ENCODE measurements at regions of chr9 and their contacts with region 1.

Region 1: GRCh38 chr9:133862585-133863256 is 124.6 kb upstream of the SARDH start:
- DNase-seq: no peak
- H3K4me3 ChIP-seq: no peak overlapping the region
- H3K27ac ChIP-seq: no peak overlapping the region
- H3K4me1 ChIP-seq: peaks cover 8% of the 10 kb centered on the region
- H3K27me3 ChIP-seq: no peaks in the 10 kb centered on the region
- CTCF ChIP-seq: no peak

Region 2: GRCh38 chr9:133825555-133826208 is 37.0 kb before region 1 on chr9:
- CTCF ChIA-PET with region 1: no interaction called
- dilution Hi-C with region 1: loop called (anchors 5 kb)
- in situ Hi-C with region 1: no loop called
- intact Hi-C with region 1: no loop called
- DNase-seq: no peak
- H3K4me3 ChIP-seq: no peak overlapping the region
- H3K27ac ChIP-seq: no peak overlapping the region
- H3K4me1 ChIP-seq: no peaks in the 10 kb centered on the region
- H3K27me3 ChIP-seq: no peaks in the 10 kb centered on the region
- CTCF ChIP-seq: no peak

Region 3: GRCh38 chr9:133904346-133905090 is 41.8 kb after region 1 on chr9:
- CTCF ChIA-PET with region 1: no interaction called
- dilution Hi-C with region 1: loop called (anchors 5 kb)
- in situ Hi-C with region 1: no loop called
- intact Hi-C with region 1: no loop called
- DNase-seq: no peak
- H3K4me3 ChIP-seq: no peak overlapping the region
- H3K27ac ChIP-seq: no peak overlapping the region
- H3K4me1 ChIP-seq: peaks cover 7% of the 10 kb centered on the region
- H3K27me3 ChIP-seq: no peaks in the 10 kb centered on the region
- CTCF ChIP-seq: no peak

Region 4: DNA sequence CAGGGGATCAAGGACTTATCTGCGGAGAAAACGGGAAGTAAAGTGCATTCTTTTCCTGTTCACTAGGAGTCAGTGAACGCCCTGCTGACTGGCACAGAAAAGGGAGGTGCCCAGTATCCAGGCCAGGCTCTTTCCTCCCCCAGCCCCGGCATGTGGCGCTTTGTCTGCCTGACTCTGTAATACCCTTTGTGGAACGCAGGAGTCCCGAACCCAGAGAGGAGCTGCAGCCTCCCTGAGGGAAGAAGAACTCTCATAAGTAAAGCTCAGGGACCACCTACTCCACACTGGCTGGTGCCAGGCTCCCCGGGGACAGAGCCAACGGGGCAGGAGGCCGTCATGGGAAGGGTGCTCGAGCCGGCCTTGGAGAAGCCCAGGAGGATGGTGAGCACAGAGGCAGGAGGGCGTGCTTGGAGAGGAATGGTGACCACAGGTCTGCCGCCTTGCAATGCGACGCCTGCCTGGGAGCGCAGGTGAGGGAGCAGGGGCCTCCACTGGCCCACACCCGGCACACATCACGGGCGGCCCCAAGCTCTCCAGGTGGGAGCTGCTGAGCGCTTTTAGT is 97.9 kb after region 1 on chr9:
- CTCF ChIA-PET with region 1: no interaction called
- dilution Hi-C with region 1: loop called (anchors 5 kb)
- in situ Hi-C with region 1: no loop called
- intact Hi-C with region 1: no loop called
- DNase-seq: no peak
- H3K4me3 ChIP-seq: no peak overlapping the region
- H3K27ac ChIP-seq: no peak overlapping the region
- H3K4me1 ChIP-seq: peaks cover 30% of the 10 kb centered on the region
- H3K27me3 ChIP-seq: no peaks in the 10 kb centered on the region
- CTCF ChIP-seq: no peak